ENCODE measurements at regions of chr5 and their contacts with region 1.

Region 1: DNA sequence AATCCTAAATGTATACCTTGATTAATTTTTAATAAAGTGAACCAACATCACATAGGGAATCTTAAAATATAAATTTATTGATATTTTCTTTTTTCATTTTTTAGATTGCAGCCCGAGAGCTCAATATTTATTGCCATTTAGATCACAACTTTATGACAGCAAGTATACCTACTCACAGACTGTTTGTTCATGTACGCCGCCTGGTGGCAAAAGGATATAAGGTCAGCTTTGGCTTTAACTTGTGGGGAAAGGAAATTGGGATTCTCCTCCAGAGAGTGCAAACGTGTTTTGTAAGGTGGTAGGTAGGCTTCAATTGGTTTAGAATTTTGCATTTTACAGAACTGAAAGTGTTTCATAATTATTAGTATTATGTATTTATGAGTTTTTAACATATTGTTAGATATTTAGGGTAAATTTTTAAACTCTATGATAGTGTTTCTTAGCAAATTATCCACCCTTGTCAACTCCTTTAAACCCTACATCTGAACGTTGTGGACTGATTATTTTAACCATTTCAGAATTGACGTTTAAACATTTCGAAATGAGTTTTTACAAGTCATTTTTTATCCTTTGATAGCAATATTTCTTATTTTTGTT is 17.5 kb upstream of the DHFR start:
- DNase-seq: peak; percentile 76
- ATAC-seq: peak; percentile 80
- H3K4me3 ChIP-seq: no peak overlapping the region
- H3K27ac ChIP-seq: no peak overlapping the region
- H3K4me1 ChIP-seq: peaks cover 17% of the 10 kb centered on the region
- H3K27me3 ChIP-seq: no peaks in the 10 kb centered on the region
- CTCF ChIP-seq: peak; percentile 82
- EP300 ChIP-seq: no peak
- POLR2A ChIP-seq: no peak
- RAD21 ChIP-seq: peak; percentile 47; the same call in 1 of the 2 replicates

Region 2: DNA sequence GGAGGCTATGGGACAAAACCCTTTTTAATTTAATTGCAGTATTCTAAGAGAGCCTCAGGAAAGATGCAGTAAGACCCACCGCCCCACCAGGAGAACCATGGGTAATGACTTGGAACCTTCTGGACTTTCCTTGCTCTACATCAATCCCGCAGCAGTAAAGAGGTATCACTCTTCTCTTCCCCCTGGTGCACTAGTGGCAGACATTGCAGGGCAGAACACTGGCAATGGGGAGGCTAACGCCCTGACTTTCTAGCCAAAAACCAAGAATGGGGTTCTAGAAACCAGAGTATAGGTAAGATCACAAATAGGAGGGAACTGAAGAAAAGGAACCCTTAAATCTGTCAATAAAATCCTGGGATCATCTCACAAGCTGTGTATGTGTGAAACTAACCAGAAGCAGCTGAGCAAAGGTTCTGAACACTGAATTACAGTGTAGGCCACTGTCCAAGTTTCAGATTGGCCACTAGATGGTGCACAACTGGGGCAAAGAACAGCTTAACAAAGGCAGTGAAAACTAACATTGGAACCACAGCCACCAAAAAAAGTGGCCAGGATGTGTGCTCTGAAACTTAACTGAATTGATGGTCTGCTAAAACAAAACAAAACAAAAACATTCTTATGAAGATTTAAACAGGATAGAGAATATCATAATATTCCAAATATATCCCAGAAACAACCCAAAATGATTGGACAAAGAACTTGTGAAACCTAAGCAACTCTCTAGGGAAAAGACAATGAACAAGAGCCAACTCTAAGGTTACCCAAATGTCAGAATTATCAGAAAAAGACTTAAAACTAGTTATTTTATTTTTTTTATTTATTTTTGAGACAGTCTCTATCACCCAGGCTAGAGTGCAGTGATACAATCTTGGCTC is 191.0 kb before region 1 on chr5:
- CTCF ChIA-PET with region 1: interaction called, 15 read pairs
- POLR2A ChIA-PET with region 1: interaction called, 5 read pairs
- in situ Hi-C with region 1: loop called (anchors 5 kb)
- intact Hi-C with region 1: loop called (anchors 2 kb)
- DNase-seq: peak; percentile 67
- ATAC-seq: peak; percentile 99
- H3K4me3 ChIP-seq: no peak overlapping the region
- H3K27ac ChIP-seq: no peak overlapping the region
- H3K4me1 ChIP-seq: peaks cover 1% of the 10 kb centered on the region; the same call in 1 of the 2 replicates
- H3K27me3 ChIP-seq: no peaks in the 10 kb centered on the region
- CTCF ChIP-seq: peak; percentile 85
- EP300 ChIP-seq: no peak
- POLR2A ChIP-seq: no peak
- RAD21 ChIP-seq: peak; percentile 56; the same call in 1 of the 2 replicates

Measured in HepG2 (cell line).